Thyroid gland (tissue), 4 donors: ENCODE measurements at regions of chr18 and their contacts with region 1.

Region 1: DNA sequence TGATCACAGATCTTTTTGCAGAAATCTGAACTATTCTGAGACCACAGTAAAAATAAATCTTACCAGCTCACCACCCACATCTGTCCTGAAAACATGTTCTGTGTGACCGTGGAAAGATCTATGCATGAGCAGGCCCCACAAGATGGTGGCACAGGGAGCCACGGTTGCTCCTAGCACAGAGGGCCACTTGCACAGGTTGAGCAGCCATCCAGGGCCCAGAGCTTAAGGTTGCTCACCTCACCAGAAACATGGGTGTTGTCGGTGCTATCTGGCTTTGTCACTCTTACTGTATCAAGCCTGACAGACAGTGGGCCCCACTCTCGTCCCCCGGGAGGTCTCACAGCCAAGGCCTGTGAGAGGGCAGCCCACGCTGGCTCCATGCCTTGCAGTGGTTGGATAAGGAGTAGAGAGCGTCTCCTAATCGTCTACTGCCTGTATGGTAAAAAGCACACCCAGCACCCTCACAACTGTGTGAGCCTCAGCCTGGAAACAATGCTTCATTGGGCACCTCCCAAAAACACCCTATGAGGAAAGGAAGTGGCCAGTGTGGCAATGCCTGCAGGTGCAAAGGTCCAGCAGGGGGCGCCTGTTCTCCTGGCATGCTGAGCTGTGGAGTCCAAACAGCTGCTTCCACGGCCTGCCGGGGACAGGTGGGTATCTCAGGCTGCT is 19.6 kb downstream of the TUBB6 start:
- DNase-seq: peak; percentile 58 to 72
- H3K4me3 ChIP-seq: no peak overlapping the region
- H3K27ac ChIP-seq: no peak overlapping the region
- H3K4me1 ChIP-seq: peaks cover 0 to 14% of the 10 kb centered on the region in 2 donors
- H3K27me3 ChIP-seq: no peaks in the 10 kb centered on the region
- CTCF ChIP-seq: peak; percentile 36 to 75 (median 50)
- POLR2A ChIP-seq: no peak

Region 2: GRCh38 chr18:12366379-12366778 is 38.7 kb after region 1 on chr18:
- intact Hi-C with region 1: loop called (anchors 5 kb)
- DNase-seq: no peak
- H3K4me3 ChIP-seq: no peak overlapping the region
- H3K27ac ChIP-seq: no peak overlapping the region
- H3K4me1 ChIP-seq: no peaks in the 10 kb centered on the region
- H3K27me3 ChIP-seq: no peaks in the 10 kb centered on the region
- CTCF ChIP-seq: no peak
- POLR2A ChIP-seq: no peak

Region 3: GRCh38 chr18:12867441-12868123 is 539.9 kb after region 1 on chr18:
- intact Hi-C with region 1: no loop called
- DNase-seq: no peak
- H3K4me3 ChIP-seq: no peak overlapping the region
- H3K27ac ChIP-seq: no peak overlapping the region
- H3K4me1 ChIP-seq: peaks cover 0 to 3% of the 10 kb centered on the region in 2 donors
- H3K27me3 ChIP-seq: no peaks in the 10 kb centered on the region
- CTCF ChIP-seq: no peak
- POLR2A ChIP-seq: no peak